ENCODE measurements at regions of chr6 and their contacts with region 1.

Region 1: DNA sequence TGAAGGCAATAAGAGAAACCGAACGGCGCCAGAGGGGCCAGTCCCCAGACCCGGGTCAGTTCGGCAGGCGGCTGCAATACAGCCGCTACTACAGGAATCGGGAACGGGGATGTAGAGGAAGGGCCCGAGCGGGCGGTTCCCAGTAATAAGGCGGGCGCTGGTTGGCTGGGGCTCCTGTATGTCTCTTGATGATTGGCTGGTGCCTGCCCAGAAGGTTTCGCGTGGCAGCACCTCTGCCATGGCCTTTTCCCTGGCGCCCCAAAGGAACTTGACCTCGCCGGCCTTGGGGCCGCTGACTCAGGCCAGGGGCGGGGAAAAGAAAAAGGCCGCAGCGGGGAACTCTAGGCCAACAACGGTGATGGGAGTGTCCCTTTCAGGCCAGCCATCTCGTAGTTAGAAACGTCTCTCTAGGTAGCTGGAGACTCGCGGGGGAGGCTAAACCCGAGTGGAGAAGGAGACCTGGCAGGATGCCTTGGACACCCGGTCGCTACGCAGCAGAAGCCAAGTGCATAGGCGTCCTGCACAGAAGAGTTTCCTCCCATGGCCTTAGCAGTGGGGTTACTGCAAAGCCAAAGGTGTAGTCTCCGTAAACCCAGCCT is at the start of gene IBTK:
- H3K4me3 Mint-ChIP-seq: peak within 1 kb of the TSS; percentile 87
- H3K27ac Mint-ChIP-seq: peak within 1 kb of the TSS; percentile 96
- H3K4me1 Mint-ChIP-seq: peaks cover 38% of the 10 kb centered on the region
- H3K27me3 Mint-ChIP-seq: no peaks in the 10 kb centered on the region

Region 2: GRCh38 chr6:82205930-82206392 is 41.8 kb before region 1 on chr6:
- intact Hi-C with region 1: no loop called
- H3K4me3 Mint-ChIP-seq: no peak overlapping the region
- H3K27ac Mint-ChIP-seq: peak overlapping the region; percentile 39
- H3K4me1 Mint-ChIP-seq: peaks cover 10% of the 10 kb centered on the region
- H3K27me3 Mint-ChIP-seq: no peaks in the 10 kb centered on the region

Region 3: GRCh38 chr6:82303808-82304207 is 56.1 kb after region 1 on chr6:
- intact Hi-C with region 1: no loop called
- H3K4me3 Mint-ChIP-seq: no peak overlapping the region
- H3K27ac Mint-ChIP-seq: no peak overlapping the region
- H3K4me1 Mint-ChIP-seq: no peaks in the 10 kb centered on the region
- H3K27me3 Mint-ChIP-seq: no peaks in the 10 kb centered on the region

Region 4: GRCh38 chr6:83057705-83058321 is 810.1 kb after region 1 on chr6:
- intact Hi-C with region 1: loop called (anchors 1 kb)
- H3K4me3 Mint-ChIP-seq: no peak overlapping the region
- H3K27ac Mint-ChIP-seq: no peak overlapping the region
- H3K4me1 Mint-ChIP-seq: no peaks in the 10 kb centered on the region
- H3K27me3 Mint-ChIP-seq: no peaks in the 10 kb centered on the region

Region 5: DNA sequence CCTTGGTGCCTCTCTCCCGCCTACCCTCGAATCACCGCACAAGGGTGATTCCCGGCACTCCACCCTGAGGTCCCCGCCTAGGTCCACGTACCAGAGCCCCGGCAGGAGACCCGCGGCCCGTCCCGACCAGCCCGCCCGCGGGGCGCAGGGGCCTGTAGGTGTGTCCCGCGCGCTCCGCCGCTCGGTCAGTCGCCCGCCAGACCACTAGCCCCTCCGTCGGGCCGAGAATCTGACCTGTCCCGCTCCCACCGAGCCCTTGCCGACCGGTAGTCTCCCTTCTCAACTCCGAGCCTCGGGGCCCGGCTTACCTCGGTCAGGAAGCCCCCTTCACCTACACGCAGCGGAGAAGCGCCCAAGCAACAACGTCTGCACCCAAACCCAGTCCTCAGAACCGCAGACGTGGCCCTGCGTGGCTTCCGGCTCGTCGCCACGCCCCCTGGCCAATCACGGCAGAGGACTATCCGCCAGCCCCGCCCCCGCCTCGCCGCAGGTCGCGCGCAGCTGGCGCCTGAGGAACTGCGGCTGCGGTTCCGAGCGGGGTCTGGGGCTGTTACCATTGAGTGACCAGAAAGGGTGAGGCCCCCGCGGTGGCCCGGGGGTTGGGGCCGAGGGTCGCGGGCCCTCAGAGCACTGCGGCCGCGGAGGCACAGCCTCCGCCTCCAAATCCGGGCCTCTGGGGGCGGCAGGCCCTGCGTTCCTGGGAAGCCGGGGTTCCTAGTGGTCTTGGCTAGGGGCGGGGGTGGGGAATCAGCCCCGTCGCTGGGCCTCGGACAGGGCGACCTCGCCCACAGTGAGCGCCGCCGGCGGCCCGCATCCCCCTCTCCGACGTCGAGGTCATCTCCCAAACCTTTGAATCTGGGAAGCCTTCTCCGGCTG is 945.4 kb after region 1 on chr6 and contains the starts of genes PGM3 and RWDD2A:
- intact Hi-C with region 1: loop called (anchors 5 kb)
- H3K4me3 Mint-ChIP-seq: peak within 1 kb of the TSS; percentile 93
- H3K27ac Mint-ChIP-seq: peak within 1 kb of the TSS; percentile 92
- H3K4me1 Mint-ChIP-seq: peaks cover 15% of the 10 kb centered on the region
- H3K27me3 Mint-ChIP-seq: peaks cover 10% of the 10 kb centered on the region

Region 6: DNA sequence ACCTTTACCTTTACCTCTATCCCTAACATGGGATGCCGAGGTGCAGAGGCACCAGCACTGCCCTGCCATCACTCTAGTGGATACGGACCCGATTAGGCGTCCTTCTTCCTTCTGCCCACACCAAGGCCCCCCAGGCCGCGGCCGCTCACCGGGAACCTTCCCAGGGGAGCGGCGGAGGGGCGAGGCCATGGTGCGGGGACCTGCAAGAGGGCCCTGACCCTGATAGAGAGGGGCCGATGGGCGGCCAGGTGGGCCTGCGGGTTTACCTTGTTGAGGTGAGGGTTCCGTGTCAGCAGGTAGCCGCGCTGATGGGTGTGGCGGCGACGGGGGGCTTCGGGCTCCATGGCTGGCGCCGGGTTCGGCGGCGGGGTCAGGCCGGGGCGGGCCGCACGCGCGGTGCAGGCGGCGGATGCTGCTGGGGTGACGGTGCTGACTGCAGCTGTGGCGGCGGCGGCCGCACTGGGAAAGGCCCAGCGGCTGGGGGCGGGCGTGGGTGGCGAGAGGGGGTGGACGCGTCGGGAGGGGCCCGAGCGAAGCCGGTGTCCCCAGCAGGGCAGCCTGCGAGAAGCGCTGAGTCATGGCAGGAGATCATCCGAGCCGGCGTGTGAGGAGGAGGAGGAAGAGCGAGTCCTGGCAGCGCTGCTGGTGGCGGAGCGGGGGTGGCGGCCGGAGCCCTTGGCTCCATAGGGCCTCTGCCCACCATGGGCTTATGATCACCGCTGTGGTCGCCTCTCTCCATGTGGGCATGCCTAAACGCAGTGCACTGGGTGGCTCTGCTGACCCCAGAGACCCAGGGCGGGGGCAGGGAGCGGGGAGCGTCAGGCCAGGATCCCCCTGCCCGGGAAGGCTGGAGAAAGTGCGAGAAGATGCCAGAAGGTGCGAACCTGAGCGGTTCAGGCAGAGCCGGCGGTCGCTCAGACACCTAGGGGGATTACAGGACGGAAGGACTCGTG is 1183.2 kb after region 1 on chr6 and contains the start of gene ME1:
- intact Hi-C with region 1: loop called (anchors 5 kb)
- H3K4me3 Mint-ChIP-seq: peak within 1 kb of the TSS; percentile 84
- H3K27ac Mint-ChIP-seq: peak within 1 kb of the TSS; percentile 92
- H3K4me1 Mint-ChIP-seq: peaks cover 34% of the 10 kb centered on the region
- H3K27me3 Mint-ChIP-seq: peaks cover 8% of the 10 kb centered on the region

Measured in dendritic cell treated with granulocyte-macrophage colony-stimulating factor and Interleukin-4, amounts not matched to agents 40 ng/mL and 50 ng/mL, for 4 days (primary cell).